ENCODE measurements at regions of chr21 and their contacts with region 1.

Region 1: GRCh38 chr21:33127154-33127893 is 57.4 kb downstream of the OLIG1 start:
- DNase-seq: peak; percentile 75 to 83 (median 82)
- H3K4me3 ChIP-seq: peak overlapping the region; percentile 37 to 78 (median 52)
- H3K4me3 Mint-ChIP-seq: peak overlapping the region; percentile 84 to 91
- H3K27ac ChIP-seq: peak overlapping the region in 1 of 2 donors; percentile 34
- H3K27ac Mint-ChIP-seq: peak overlapping the region in 5 of 7 donors; percentile 61 to 76 (median 64)
- H3K4me1 ChIP-seq: peaks cover 10 to 13% of the 10 kb centered on the region in 2 donors
- H3K4me1 Mint-ChIP-seq: peaks cover 27% of the 10 kb centered on the region
- H3K27me3 ChIP-seq: peaks cover 11 to 15% of the 10 kb centered on the region in 2 donors
- H3K27me3 Mint-ChIP-seq: peaks cover 8 to 11% (median 10%) of the 10 kb centered on the region in 3 donors
- CTCF ChIP-seq: peak; percentile 92

Region 2: DNA sequence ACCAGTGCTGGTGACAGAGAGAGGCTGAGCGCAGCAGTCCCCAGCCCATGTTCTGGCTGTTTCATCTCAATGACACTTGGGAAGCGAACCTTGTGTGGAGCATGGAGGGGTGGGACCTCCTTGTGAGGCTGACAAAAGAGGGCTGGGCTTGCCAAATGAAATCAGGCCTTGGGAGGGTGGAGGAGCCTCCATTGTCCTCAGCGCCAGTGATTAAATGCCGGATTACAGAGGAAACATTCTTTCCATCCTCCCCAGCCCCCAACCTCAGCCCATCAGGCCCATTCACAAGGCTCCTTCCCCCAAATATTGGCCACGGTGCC is 292.4 kb before region 1 on chr21:
- intact Hi-C with region 1: loop called (anchors 5 to 10 kb)
- DNase-seq: no peak
- H3K4me3 ChIP-seq: no peak overlapping the region
- H3K4me3 Mint-ChIP-seq: no peak overlapping the region
- H3K27ac ChIP-seq: no peak overlapping the region
- H3K27ac Mint-ChIP-seq: no peak overlapping the region
- H3K4me1 ChIP-seq: no peaks in the 10 kb centered on the region
- H3K4me1 Mint-ChIP-seq: peaks cover 3% of the 10 kb centered on the region
- H3K27me3 ChIP-seq: no peaks in the 10 kb centered on the region
- H3K27me3 Mint-ChIP-seq: peaks cover 3 to 7% (median 5%) of the 10 kb centered on the region in 3 donors
- CTCF ChIP-seq: no peak

Region 3: GRCh38 chr21:32921632-32922230 is 205.6 kb before region 1 on chr21:
- intact Hi-C with region 1: loop called in 1 of 2 experiments (anchors 5 kb)
- DNase-seq: peak; percentile 40 to 58 (median 41)
- H3K4me3 ChIP-seq: no peak overlapping the region
- H3K4me3 Mint-ChIP-seq: no peak overlapping the region
- H3K27ac ChIP-seq: no peak overlapping the region
- H3K27ac Mint-ChIP-seq: no peak overlapping the region
- H3K4me1 ChIP-seq: peaks cover 8 to 9% of the 10 kb centered on the region in 2 donors
- H3K4me1 Mint-ChIP-seq: peaks cover 4% of the 10 kb centered on the region
- H3K27me3 ChIP-seq: no peaks in the 10 kb centered on the region
- H3K27me3 Mint-ChIP-seq: peaks cover 2 to 3% (median 2%) of the 10 kb centered on the region in 3 donors
- CTCF ChIP-seq: peak; percentile 89

Region 4: DNA sequence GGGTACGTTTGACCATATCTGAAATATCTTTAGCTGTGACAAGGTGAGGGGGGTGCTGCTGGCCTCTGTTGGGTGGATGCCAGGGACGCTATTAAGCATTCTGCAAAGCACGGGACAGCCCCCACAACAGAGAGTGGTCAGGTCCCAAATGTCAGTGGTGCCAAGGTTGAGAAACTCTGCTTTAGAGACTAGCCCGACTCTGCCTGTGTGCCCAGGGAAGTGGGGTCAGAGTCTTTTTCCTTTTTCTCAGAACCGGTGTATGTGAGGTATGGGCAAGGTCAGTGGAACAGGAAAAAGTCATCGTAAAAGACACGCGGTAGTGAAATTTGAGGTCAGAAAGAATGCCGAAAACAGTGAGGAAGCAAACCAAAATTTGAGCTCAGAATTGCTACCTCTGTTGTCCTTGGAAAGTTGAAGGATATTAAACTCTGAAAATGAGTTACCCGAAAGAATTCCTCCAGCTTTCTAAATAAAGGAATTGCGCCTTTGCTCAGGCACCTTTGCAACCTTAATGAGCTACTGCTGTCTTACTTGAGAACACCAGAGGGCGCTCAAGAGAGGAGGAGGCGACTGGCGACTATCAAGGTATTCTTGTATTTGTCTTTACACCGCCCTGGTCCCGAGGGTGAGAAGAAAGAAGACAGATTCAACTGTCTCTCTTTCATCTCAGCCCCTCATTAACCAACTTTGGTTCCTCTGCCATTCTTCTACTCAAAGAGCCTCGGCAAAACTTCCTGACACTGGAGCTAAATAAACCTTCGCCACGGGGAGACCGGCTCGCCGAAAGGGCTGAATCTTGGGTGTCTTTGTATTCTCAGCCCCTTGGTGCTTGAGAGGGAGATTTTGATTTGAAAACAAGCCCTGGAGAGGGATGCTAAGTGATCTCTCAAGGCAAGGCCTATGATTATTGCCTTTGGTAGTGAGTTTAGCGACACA is 187.0 kb before region 1 on chr21:
- intact Hi-C with region 1: loop called (anchors 2 to 5 kb)
- DNase-seq: peak; percentile 38 to 57 (median 47)
- H3K4me3 ChIP-seq: no peak overlapping the region
- H3K4me3 Mint-ChIP-seq: peak overlapping the region in 1 of 2 donors; percentile 48
- H3K27ac ChIP-seq: no peak overlapping the region
- H3K27ac Mint-ChIP-seq: no peak overlapping the region
- H3K4me1 ChIP-seq: no peaks in the 10 kb centered on the region
- H3K4me1 Mint-ChIP-seq: peaks cover 4% of the 10 kb centered on the region
- H3K27me3 ChIP-seq: no peaks in the 10 kb centered on the region
- H3K27me3 Mint-ChIP-seq: peaks cover 6 to 11% (median 8%) of the 10 kb centered on the region in 3 donors
- CTCF ChIP-seq: peak; percentile 86

Region 5: GRCh38 chr21:32994305-32994704 is 133.0 kb before region 1 on chr21:
- intact Hi-C with region 1: loop called (anchors 1 to 5 kb)
- DNase-seq: peak; percentile 27 to 60 (median 52)
- H3K4me3 ChIP-seq: no peak overlapping the region
- H3K4me3 Mint-ChIP-seq: no peak overlapping the region
- H3K27ac ChIP-seq: no peak overlapping the region
- H3K27ac Mint-ChIP-seq: peak overlapping the region in 1 of 7 donors; percentile 33
- H3K4me1 ChIP-seq: no peaks in the 10 kb centered on the region
- H3K4me1 Mint-ChIP-seq: peaks cover 6% of the 10 kb centered on the region
- H3K27me3 ChIP-seq: peaks cover 7 to 24% of the 10 kb centered on the region in 2 donors
- H3K27me3 Mint-ChIP-seq: peaks cover 22 to 30% (median 24%) of the 10 kb centered on the region in 3 donors
- CTCF ChIP-seq: peak; percentile 78

Region 6: DNA sequence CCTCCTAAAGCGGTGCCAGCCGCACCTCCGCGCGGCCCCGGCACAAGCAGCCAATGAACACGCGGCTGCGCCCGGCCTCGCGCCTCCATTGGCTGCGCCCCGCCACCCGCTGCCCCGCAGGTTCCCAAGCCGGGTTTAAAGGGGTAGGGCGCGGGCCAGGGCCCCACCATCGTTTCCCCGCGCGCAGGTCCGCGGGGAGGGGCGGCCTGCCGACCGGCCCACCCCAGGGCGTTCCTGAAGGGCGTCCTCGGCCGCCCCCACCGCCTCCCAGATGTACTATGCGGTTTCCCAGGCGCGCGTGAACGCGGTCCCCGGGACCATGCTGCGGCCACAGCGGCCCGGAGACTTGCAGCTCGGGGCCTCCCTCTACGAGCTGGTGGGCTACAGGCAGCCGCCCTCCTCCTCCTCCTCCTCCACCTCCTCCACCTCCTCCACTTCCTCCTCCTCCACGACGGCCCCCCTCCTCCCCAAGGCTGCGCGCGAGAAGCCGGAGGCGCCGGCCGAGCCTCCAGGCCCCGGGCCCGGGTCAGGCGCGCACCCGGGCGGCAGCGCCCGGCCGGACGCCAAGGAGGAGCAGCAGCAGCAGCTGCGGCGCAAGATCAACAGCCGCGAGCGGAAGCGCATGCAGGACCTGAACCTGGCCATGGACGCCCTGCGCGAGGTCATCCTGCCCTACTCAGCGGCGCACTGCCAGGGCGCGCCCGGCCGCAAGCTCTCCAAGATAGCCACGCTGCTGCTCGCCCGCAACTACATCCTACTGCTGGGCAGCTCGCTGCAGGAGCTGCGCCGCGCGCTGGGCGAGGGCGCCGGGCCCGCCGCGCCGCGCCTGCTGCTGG is 57.1 kb before region 1 on chr21 and contains the start of gene OLIG1:
- intact Hi-C with region 1: no loop called
- DNase-seq: peak; percentile 69 to 74 (median 72)
- H3K4me3 ChIP-seq: peak within 1 kb of the TSS; percentile 76 to 89 (median 87)
- H3K4me3 Mint-ChIP-seq: peak within 1 kb of the TSS; percentile 93 to 97
- H3K27ac ChIP-seq: peak within 1 kb of the TSS; percentile 64 to 84
- H3K27ac Mint-ChIP-seq: peak within 1 kb of the TSS; percentile 38 to 95 (median 90)
- H3K4me1 ChIP-seq: peaks cover 51 to 68% of the 10 kb centered on the region in 2 donors
- H3K4me1 Mint-ChIP-seq: peaks cover 63% of the 10 kb centered on the region
- H3K27me3 ChIP-seq: peaks cover 4 to 29% of the 10 kb centered on the region in 2 donors
- H3K27me3 Mint-ChIP-seq: peaks cover 9 to 24% (median 24%) of the 10 kb centered on the region in 3 donors
- CTCF ChIP-seq: no peak
- polyA plus RNA-seq, gene OLIG1: 20.0 to 51.0 (median 40.7) TPM